ENCODE measurements at regions of chr13 and their contacts with region 1.

Region 1: DNA sequence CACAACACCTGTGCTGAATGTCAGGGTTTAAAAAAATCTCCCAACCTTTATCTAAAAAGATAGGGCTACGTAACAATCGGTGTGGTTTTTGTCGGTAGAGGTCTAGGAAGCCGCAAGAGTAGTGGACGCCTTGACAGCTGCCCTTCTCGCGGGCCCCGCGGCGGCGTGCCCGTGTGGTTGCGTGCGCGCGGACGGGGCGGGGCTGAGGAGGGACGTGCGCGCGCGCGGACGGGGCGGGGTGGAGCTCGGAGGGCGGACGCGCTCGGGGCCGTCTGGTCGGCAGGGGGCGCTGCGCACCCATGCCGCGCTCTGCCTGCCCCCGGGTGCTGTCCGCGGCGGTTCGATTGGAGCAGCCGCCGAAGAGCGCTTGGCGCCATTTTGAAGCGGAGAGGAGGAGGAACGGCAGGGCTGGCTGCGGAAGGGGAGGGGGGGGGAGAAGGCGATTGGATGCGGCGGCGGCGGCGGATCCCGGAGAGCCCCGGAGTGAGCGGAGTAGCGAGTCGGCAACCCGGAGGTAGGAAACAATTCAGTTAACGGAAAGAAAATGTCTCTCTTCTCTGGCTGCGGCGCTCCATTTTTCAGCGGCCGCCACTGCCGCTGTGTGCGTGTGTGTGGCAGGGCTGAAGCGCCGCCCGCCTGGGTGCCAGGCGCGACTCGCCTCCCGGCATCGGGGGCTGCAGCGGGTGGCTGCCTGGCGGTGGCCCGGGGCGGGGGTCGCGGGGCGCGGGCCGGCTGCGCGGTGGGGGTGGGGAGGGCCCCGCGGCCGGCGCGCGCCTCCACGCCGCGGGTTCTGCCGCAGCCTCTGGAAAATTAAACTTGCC is at the start of gene PDS5B:
- DNase-seq: peak; percentile 96
- H3K4me3 ChIP-seq: peak within 1 kb of the TSS; percentile 43 to 98 (median 89)
- H3K27ac ChIP-seq: peak within 1 kb of the TSS; percentile 86
- H3K4me1 ChIP-seq: peaks cover 20% of the 10 kb centered on the region
- H3K27me3 ChIP-seq: peaks cover 0 to 1% of the 10 kb centered on the region in 2 experiments
- CTCF ChIP-seq: peak; percentile 76 to 93
- POLR2A ChIP-seq: peak; percentile 83
- total RNA-seq, gene PDS5B: 40.3 and 41.0 TPM in 2 replicates

Region 2: DNA sequence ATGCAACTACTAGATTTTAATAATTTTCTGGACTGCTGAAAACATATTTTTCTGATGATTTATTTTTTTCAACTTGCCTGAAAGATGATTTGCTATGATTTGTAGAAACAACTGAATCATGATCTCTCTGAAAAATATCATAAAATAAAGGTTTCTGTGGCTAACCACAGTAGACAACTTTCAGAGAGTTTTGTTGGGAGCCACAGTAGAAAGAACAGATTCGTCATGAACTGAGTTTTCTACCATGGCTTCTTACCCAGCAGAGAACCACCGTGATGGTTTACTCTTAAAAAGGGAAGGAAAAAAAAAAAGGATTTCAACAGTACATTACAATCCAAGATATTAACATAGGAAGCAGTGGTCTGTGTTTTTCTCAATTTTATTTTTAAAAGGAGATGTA is 289.1 kb before region 1 on chr13:
- CTCF ChIA-PET with region 1: no interaction called
- POLR2A ChIA-PET with region 1: no interaction called
- dilution Hi-C with region 1: no loop called
- intact Hi-C with region 1: no loop called
- DNase-seq: no peak
- H3K4me3 ChIP-seq: no peak overlapping the region
- H3K27ac ChIP-seq: no peak overlapping the region
- H3K4me1 ChIP-seq: peaks cover 9% of the 10 kb centered on the region
- H3K27me3 ChIP-seq: no peaks in the 10 kb centered on the region
- CTCF ChIP-seq: no peak
- POLR2A ChIP-seq: no peak

Region 3: DNA sequence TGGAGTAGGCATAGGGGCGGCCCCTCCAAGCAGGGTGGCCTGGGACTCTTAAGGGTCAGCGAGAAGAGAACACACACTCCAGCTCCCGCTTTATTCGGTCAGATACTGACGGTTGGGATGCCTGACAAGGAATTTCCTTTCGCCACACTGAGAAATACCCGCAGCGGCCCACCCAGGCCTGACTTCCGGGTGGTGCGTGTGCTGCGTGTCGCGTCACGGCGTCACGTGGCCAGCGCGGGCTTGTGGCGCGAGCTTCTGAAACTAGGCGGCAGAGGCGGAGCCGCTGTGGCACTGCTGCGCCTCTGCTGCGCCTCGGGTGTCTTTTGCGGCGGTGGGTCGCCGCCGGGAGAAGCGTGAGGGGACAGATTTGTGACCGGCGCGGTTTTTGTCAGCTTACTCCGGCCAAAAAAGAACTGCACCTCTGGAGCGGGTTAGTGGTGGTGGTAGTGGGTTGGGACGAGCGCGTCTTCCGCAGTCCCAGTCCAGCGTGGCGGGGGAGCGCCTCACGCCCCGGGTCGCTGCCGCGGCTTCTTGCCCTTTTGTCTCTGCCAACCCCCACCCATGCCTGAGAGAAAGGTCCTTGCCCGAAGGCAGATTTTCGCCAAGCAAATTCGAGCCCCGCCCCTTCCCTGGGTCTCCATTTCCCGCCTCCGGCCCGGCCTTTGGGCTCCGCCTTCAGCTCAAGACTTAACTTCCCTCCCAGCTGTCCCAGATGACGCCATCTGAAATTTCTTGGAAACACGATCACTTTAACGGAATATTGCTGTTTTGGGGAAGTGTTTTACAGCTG is 270.9 kb before region 1 on chr13 and contains the starts of genes BRCA2 and ZAR1L:
- CTCF ChIA-PET with region 1: interaction called, 7 read pairs
- POLR2A ChIA-PET with region 1: no interaction called
- dilution Hi-C with region 1: no loop called
- intact Hi-C with region 1: loop called (anchors 5 kb)
- DNase-seq: peak; percentile 86
- H3K4me3 ChIP-seq: peak within 1 kb of the TSS; percentile 37 to 96 (median 56)
- H3K27ac ChIP-seq: peak within 1 kb of the TSS; percentile 88
- H3K4me1 ChIP-seq: peaks cover 14% of the 10 kb centered on the region
- H3K27me3 ChIP-seq: no peaks in the 10 kb centered on the region
- CTCF ChIP-seq: no peak
- POLR2A ChIP-seq: peak; percentile 53
- total RNA-seq, gene BRCA2: 16.1 and 17.5 TPM in 2 replicates
- total RNA-seq, gene ZAR1L: not detected in 2 replicates

Region 4: GRCh38 chr13:32609428-32609827 is 23.1 kb after region 1 on chr13:
- CTCF ChIA-PET with region 1: no interaction called
- POLR2A ChIA-PET with region 1: no interaction called
- dilution Hi-C with region 1: no loop called
- intact Hi-C with region 1: no loop called
- DNase-seq: no peak
- H3K4me3 ChIP-seq: no peak overlapping the region
- H3K27ac ChIP-seq: no peak overlapping the region
- H3K4me1 ChIP-seq: no peaks in the 10 kb centered on the region
- H3K27me3 ChIP-seq: no peaks in the 10 kb centered on the region
- CTCF ChIP-seq: no peak
- POLR2A ChIP-seq: no peak

Region 5: GRCh38 chr13:32650705-32651311 is 64.5 kb after region 1 on chr13:
- CTCF ChIA-PET with region 1: interaction called, 22 read pairs
- POLR2A ChIA-PET with region 1: no interaction called
- dilution Hi-C with region 1: no loop called
- intact Hi-C with region 1: loop called (anchors 1 kb)
- DNase-seq: peak; percentile 77
- H3K4me3 ChIP-seq: no peak overlapping the region
- H3K27ac ChIP-seq: no peak overlapping the region
- H3K4me1 ChIP-seq: no peaks in the 10 kb centered on the region
- H3K27me3 ChIP-seq: no peaks in the 10 kb centered on the region
- CTCF ChIP-seq: peak; percentile 73 to 78
- POLR2A ChIP-seq: no peak

Region 6: GRCh38 chr13:32783067-32783466 is 196.8 kb after region 1 on chr13:
- CTCF ChIA-PET with region 1: no interaction called
- POLR2A ChIA-PET with region 1: no interaction called
- dilution Hi-C with region 1: no loop called
- intact Hi-C with region 1: loop called (anchors 10 kb)
- DNase-seq: no peak
- H3K4me3 ChIP-seq: no peak overlapping the region
- H3K27ac ChIP-seq: no peak overlapping the region
- H3K4me1 ChIP-seq: no peaks in the 10 kb centered on the region
- H3K27me3 ChIP-seq: no peaks in the 10 kb centered on the region
- CTCF ChIP-seq: no peak
- POLR2A ChIP-seq: no peak

Region 7: GRCh38 chr13:32824671-32825070 is 238.4 kb after region 1 on chr13:
- CTCF ChIA-PET with region 1: no interaction called
- POLR2A ChIA-PET with region 1: no interaction called
- dilution Hi-C with region 1: no loop called
- intact Hi-C with region 1: no loop called
- DNase-seq: no peak
- H3K4me3 ChIP-seq: no peak overlapping the region
- H3K27ac ChIP-seq: no peak overlapping the region
- H3K4me1 ChIP-seq: no peaks in the 10 kb centered on the region
- H3K27me3 ChIP-seq: peaks cover 3 to 5% of the 10 kb centered on the region in 2 experiments
- CTCF ChIP-seq: no peak
- POLR2A ChIP-seq: no peak

Region 8: GRCh38 chr13:33153421-33154404 is 567.4 kb after region 1 on chr13:
- CTCF ChIA-PET with region 1: no interaction called
- POLR2A ChIA-PET with region 1: no interaction called
- dilution Hi-C with region 1: no loop called
- intact Hi-C with region 1: loop called (anchors 1 kb)
- DNase-seq: peak; percentile 96
- H3K4me3 ChIP-seq: no peak overlapping the region
- H3K27ac ChIP-seq: peak overlapping the region; percentile 91
- H3K4me1 ChIP-seq: peaks cover 31% of the 10 kb centered on the region
- H3K27me3 ChIP-seq: no peaks in the 10 kb centered on the region
- CTCF ChIP-seq: peak; percentile 59 to 65
- POLR2A ChIP-seq: peak; percentile 46

Region 9: DNA sequence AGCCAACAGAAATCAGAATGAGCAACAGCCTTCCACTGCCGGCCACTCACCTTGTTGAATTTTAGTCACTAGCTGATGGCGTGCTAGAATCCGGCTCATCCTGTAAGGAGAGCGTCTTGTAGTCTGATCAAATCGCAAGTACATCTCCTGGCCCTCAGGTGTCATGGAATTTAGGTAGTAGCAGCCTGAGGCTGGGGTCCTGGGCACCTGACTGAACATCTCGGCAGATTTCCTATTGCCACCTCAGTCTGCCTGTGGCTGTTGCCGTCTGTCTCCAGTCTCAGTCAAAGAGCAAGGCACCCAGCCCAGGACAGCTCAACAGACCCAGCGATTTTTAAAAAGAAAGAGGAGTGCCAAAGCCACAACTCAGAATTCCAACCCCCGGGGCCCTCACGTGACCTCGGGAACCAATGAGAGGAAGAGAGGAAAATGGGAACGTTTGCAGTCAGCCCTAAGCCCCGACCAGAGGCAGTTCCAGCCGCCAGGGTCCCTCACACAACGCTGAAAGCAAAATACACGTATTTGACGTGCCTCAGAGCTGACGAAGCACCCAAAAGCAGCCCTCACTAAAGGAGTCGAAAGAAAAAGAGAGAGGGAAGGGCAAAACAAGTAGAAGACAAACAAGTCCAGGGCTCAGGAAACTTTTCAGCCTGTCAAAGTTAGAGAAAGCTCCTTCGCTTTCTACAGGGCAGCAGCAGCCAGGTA is 699.3 kb after region 1 on chr13 and contains the start of gene STARD13:
- CTCF ChIA-PET with region 1: no interaction called
- POLR2A ChIA-PET with region 1: no interaction called
- dilution Hi-C with region 1: no loop called
- intact Hi-C with region 1: loop called (anchors 1 kb)
- DNase-seq: peak; percentile 98
- H3K4me3 ChIP-seq: peak within 1 kb of the TSS; percentile 79 to 98 (median 88)
- H3K27ac ChIP-seq: peak within 1 kb of the TSS; percentile 99
- H3K4me1 ChIP-seq: peaks cover 30% of the 10 kb centered on the region
- H3K27me3 ChIP-seq: no peaks in the 10 kb centered on the region
- CTCF ChIP-seq: peak; percentile 29 to 49
- POLR2A ChIP-seq: peak; percentile 85
- total RNA-seq, gene STARD13: 41.1 and 47.7 TPM in 2 replicates